WTC11 (cell line): ENCODE measurements at regions of chr18 and their contacts with region 1.

Region 1: DNA sequence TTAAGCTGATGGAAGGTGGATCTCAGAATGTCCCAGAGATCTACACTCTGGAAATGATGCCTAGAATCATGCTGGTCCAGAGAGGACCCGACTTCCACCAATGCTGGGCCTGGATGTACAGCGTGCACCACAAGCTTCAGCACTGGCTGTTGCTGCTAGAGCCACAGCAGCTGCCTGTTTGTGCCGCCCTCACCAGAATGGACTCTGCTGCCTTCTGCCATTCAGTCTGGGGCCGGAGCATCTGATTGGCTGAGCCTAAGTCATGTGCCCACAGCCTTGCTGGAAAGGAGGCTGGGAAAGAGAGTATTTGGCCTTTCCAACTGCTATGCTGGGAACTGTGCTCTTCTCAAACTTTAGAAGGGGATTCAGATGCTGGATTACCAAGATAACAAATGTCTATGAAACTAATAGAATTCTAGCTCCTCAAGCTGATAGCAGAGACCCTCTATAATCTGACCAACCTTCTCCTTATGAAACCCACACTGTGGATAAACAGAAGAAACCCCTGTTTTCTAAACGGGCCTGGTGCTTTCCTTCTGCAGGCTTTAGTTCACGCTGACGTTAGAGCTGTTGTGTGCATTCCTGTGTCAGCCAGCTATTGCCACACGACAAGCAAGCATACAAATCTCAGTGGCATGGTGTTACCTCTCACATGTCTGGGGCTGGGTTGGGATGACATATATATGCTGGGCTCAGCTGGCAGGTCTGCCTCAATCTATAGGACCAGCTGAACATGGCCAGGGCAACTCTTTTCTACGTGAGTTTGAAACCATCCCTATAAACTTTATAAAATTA is 4.1 kb upstream of the LOXHD1 start:
- DNase-seq: peak; percentile 67
- ATAC-seq: peak; percentile 62
- H3K4me3 Mint-ChIP-seq: no peak overlapping the region
- H3K27ac Mint-ChIP-seq: no peak overlapping the region
- H3K4me1 Mint-ChIP-seq: peaks cover 19% of the 10 kb centered on the region
- H3K27me3 Mint-ChIP-seq: peaks cover 7% of the 10 kb centered on the region
- CTCF ChIP-seq: no peak

Region 2: GRCh38 chr18:46281185-46282176 is 379.7 kb before region 1 on chr18:
- CTCF ChIA-PET with region 1: interaction called, 104 read pairs
- POLR2A ChIA-PET with region 1: no interaction called
- DNase-seq: peak; percentile 84
- ATAC-seq: peak; percentile 83
- H3K4me3 Mint-ChIP-seq: no peak overlapping the region
- H3K27ac Mint-ChIP-seq: no peak overlapping the region
- H3K4me1 Mint-ChIP-seq: peaks cover 30% of the 10 kb centered on the region
- H3K27me3 Mint-ChIP-seq: no peaks in the 10 kb centered on the region; the same call in 1 of the 2 replicates
- CTCF ChIP-seq: peak; percentile 83

Region 3: DNA sequence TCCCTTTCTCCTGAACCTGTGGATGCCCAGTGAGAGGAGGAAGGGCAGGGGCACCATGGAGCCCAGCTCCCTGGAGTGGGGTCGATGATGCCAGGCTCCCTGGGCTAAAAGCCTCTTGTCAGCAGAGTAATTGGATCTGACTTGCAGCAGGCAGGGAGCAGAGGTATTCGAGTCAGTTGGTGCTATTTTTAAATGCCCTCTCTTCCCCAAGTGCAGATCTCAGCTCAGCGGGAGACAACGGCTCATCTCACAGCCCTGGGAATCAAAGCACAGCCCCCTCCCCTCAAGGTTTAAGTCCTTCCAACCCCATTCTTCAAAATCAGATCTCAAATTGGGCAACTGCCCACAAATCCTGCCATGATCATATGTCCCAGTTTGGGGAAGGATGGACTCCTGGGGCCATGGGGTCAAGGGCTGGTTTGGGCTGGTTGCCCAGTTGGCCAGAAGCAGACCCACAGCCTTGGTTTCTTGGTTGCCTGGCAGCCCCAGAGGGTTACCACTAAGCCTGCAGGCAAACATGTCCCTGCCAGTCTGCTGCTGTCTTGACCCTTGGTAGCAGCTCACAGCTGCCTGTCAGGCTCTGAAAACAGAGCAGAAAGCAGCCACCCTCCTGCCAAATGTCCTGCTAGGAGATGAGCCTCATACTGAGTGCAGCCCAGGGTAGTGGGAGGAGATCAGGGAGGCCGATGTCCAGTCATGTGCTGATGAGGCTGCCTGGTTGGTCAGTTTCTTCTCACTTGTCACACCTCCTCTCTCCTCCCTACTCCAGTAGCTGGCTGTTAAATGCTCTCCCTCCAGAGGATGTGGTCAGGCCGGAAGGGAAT is 249.1 kb before region 1 on chr18:
- CTCF ChIA-PET with region 1: interaction called, 18 read pairs
- POLR2A ChIA-PET with region 1: no interaction called
- DNase-seq: no peak
- ATAC-seq: no peak
- H3K4me3 Mint-ChIP-seq: no peak overlapping the region
- H3K27ac Mint-ChIP-seq: peak overlapping the region; percentile 10; the same call in 1 of the 2 replicates
- H3K4me1 Mint-ChIP-seq: peaks cover 58% of the 10 kb centered on the region
- H3K27me3 Mint-ChIP-seq: no peaks in the 10 kb centered on the region
- CTCF ChIP-seq: no peak

Region 4: GRCh38 chr18:46518438-46518837 is 142.7 kb before region 1 on chr18:
- CTCF ChIA-PET with region 1: interaction called, 45 read pairs
- POLR2A ChIA-PET with region 1: no interaction called
- DNase-seq: peak; percentile 38
- ATAC-seq: peak; percentile 68
- H3K4me3 Mint-ChIP-seq: no peak overlapping the region
- H3K27ac Mint-ChIP-seq: no peak overlapping the region
- H3K4me1 Mint-ChIP-seq: no peaks in the 10 kb centered on the region
- H3K27me3 Mint-ChIP-seq: peaks cover 2% of the 10 kb centered on the region
- CTCF ChIP-seq: no peak

Region 5: GRCh38 chr18:46591783-46592399 is 69.3 kb before region 1 on chr18:
- CTCF ChIA-PET with region 1: interaction called, 13 read pairs
- POLR2A ChIA-PET with region 1: interaction called, 3 read pairs
- DNase-seq: no peak
- ATAC-seq: peak; percentile 28; the same call in 1 of the 2 replicates
- H3K4me3 Mint-ChIP-seq: no peak overlapping the region
- H3K27ac Mint-ChIP-seq: no peak overlapping the region
- H3K4me1 Mint-ChIP-seq: peaks cover 13% of the 10 kb centered on the region
- H3K27me3 Mint-ChIP-seq: no peaks in the 10 kb centered on the region
- CTCF ChIP-seq: no peak

Region 6: GRCh38 chr18:46672062-46672970 is 11.2 kb after region 1 on chr18:
- CTCF ChIA-PET with region 1: interaction called, 29 read pairs
- POLR2A ChIA-PET with region 1: interaction called, 5 read pairs
- DNase-seq: no peak
- ATAC-seq: 0 out of 2 replicates have a peak, but pooled peaks have one; percentile 23
- H3K4me3 Mint-ChIP-seq: no peak overlapping the region
- H3K27ac Mint-ChIP-seq: peak overlapping the region; percentile 21; the same call in 1 of the 2 replicates
- H3K4me1 Mint-ChIP-seq: peaks cover 40% of the 10 kb centered on the region
- H3K27me3 Mint-ChIP-seq: no peaks in the 10 kb centered on the region; the same call in 1 of the 2 replicates
- CTCF ChIP-seq: no peak